ENCODE measurements at regions of chr14 and their contacts with region 1.

Region 1: DNA sequence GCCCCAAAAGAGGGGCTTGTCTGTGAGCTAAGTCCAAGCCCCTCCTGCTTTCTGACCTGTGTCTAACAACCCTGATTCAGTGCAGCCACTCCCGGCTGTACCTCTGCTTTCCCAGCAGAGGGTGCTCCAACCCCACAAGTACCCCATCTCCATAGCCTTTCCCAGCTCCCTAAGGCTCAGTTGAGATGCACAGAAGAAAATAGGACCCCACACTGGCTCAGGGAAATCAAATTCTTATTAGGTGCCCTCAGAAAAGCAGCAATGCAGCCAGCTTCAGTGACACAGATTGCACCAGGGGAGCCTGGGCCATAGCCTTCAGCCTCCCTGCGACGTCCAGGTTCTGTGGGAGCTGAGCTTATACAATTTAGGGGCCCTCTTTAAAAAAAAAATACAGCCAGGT is 49.9 kb downstream of the LRRC74A start:
- DNase-seq: peak; percentile 81
- ATAC-seq: peak; percentile 95
- H3K4me3 ChIP-seq: no peak overlapping the region
- H3K27ac ChIP-seq: no peak overlapping the region
- H3K4me1 ChIP-seq: peaks cover 0 to 9% of the 10 kb centered on the region in 2 experiments; a peak in 3 of 4 replicates
- H3K27me3 ChIP-seq: no peaks in the 10 kb centered on the region
- CTCF ChIP-seq: peak; percentile 96 to 98 (median 97)
- POLR2A ChIP-seq: no peak
- RAD21 ChIP-seq: peak; percentile 100

Region 2: DNA sequence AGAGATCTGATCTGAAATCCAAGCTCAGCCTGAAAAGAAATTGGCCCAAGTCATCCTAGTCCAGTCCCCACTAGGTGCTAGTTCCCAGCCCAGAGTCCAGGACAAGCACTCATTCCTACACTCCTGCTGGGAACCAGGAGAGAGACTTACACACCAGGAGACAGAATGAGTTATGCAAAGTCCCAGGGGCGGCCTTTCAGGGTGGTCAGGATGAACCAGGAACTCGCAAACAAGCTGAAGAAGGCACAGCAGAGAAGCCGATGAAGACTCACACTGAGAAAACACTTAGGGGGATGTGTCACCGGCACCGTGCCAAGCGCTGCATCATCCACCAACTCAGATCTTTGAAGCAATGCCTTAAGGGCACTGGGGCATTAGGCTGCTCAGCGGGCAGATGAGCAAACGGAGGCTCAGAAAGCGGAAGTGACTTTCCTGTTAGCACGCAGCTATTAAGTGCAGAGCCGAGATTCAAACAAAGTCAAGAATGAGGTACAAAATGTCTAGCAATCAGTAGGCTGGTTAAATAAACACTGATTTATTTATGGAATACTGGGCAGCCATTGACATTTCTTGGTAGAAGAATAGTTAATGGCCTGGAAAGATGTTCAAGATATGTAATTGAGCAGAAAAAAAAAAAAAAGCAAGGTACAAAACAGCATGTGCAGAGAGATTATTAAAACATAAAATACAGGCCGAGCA is 28.8 kb after region 1 on chr14:
- CTCF ChIA-PET with region 1: interaction called, 7 read pairs
- POLR2A ChIA-PET with region 1: interaction called, 7 read pairs
- RAD21 ChIA-PET with region 1: interaction called in 1 of 2 experiments, 10 read pairs
- intact Hi-C with region 1: no loop called
- DNase-seq: peak; percentile 87
- ATAC-seq: peak; percentile 85
- H3K4me3 ChIP-seq: peak overlapping the region; percentile 9 to 49; a peak in 2 of 4 replicates
- H3K27ac ChIP-seq: peak overlapping the region; percentile 81
- H3K4me1 ChIP-seq: peaks cover 45 to 55% of the 10 kb centered on the region in 2 experiments
- H3K27me3 ChIP-seq: no peaks in the 10 kb centered on the region
- CTCF ChIP-seq: no peak
- POLR2A ChIP-seq: no peak
- RAD21 ChIP-seq: peak; percentile 6; the same call in 1 of the 2 replicates

Region 3: DNA sequence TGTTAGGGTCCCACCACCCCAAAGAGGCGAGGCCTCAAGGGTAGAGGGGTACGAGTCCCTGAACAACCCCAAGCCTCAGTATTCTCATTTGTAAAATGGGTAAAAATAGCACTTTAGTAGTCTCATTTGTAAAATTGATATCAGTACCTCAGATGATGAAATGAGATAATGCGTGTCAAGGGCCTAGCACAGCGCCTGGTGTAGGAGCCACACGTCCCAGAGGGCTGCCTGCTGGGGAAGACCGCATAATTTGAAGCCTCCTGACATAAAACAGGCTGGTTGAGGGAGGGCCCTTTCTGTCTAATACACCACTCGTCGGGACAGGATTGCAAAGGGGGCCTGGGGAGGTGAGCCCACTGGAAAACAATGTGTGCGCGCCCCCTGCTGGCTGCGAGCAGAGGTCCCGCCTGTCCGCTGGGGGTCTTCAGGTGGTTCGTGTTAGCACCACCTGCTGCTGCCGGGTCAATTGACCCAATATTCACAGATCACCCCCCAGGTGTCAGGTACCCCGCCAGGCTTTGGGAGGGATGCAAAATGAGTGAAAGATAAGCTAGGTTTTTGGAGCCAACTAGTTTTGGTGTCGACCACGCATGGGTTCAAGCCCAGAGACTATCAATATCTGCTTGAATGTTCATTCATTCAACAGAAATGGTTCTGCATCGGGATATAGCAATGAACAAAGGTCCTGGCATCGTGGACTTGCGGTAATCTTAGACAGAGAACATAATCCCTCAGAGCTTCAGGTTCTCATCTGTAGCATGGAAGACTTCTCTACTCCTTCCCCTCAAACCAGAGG is 177.2 kb after region 1 on chr14:
- CTCF ChIA-PET with region 1: interaction called, 20 read pairs
- POLR2A ChIA-PET with region 1: no interaction called
- RAD21 ChIA-PET with region 1: interaction called, 3 to 7 read pairs
- intact Hi-C with region 1: no loop called
- DNase-seq: no peak
- ATAC-seq: peak; percentile 84
- H3K4me3 ChIP-seq: no peak overlapping the region
- H3K27ac ChIP-seq: peak overlapping the region; percentile 50; the same call in 1 of the 2 replicates
- H3K4me1 ChIP-seq: peaks cover 27 to 33% of the 10 kb centered on the region in 2 experiments
- H3K27me3 ChIP-seq: no peaks in the 10 kb centered on the region
- CTCF ChIP-seq: peak in 2 of 3 experiments; percentile 90 to 99; a peak in 4 of 6 replicates
- POLR2A ChIP-seq: no peak
- RAD21 ChIP-seq: no peak

Region 4: GRCh38 chr14:77076113-77076631 is 200.1 kb after region 1 on chr14:
- CTCF ChIA-PET with region 1: interaction called, 272 read pairs
- POLR2A ChIA-PET with region 1: interaction called, 27 read pairs
- RAD21 ChIA-PET with region 1: interaction called, 40 to 54 read pairs
- intact Hi-C with region 1: no loop called
- DNase-seq: no peak
- ATAC-seq: no peak
- H3K4me3 ChIP-seq: no peak overlapping the region
- H3K27ac ChIP-seq: no peak overlapping the region
- H3K4me1 ChIP-seq: peaks cover 19 to 31% of the 10 kb centered on the region in 2 experiments
- H3K27me3 ChIP-seq: no peaks in the 10 kb centered on the region
- CTCF ChIP-seq: no peak
- POLR2A ChIP-seq: no peak
- RAD21 ChIP-seq: no peak

Region 5: GRCh38 chr14:77097700-77098528 is 221.8 kb after region 1 on chr14 and contains the start of gene CIPC:
- CTCF ChIA-PET with region 1: interaction called, 131 read pairs
- POLR2A ChIA-PET with region 1: interaction called, 8 read pairs
- RAD21 ChIA-PET with region 1: interaction called, 7 to 13 read pairs
- intact Hi-C with region 1: loop called (anchors 1 kb)
- DNase-seq: peak; percentile 98
- ATAC-seq: peak; percentile 89
- H3K4me3 ChIP-seq: peak within 1 kb of the TSS; percentile 85 to 97
- H3K27ac ChIP-seq: peak within 1 kb of the TSS; percentile 91
- H3K4me1 ChIP-seq: peaks cover 24 to 28% of the 10 kb centered on the region in 2 experiments
- H3K27me3 ChIP-seq: no peaks in the 10 kb centered on the region
- CTCF ChIP-seq: no peak
- POLR2A ChIP-seq: peak; percentile 38
- RAD21 ChIP-seq: no peak
- total RNA-seq, gene CIPC: 20.6 TPM

Region 6: GRCh38 chr14:77306851-77307765 is 431.0 kb after region 1 on chr14:
- CTCF ChIA-PET with region 1: interaction called, 9 read pairs
- POLR2A ChIA-PET with region 1: no interaction called
- RAD21 ChIA-PET with region 1: no interaction called
- intact Hi-C with region 1: loop called (anchors 5 kb)
- DNase-seq: no peak
- ATAC-seq: no peak
- H3K4me3 ChIP-seq: no peak overlapping the region
- H3K27ac ChIP-seq: no peak overlapping the region
- H3K4me1 ChIP-seq: peaks cover 19 to 22% of the 10 kb centered on the region in 2 experiments
- H3K27me3 ChIP-seq: no peaks in the 10 kb centered on the region
- CTCF ChIP-seq: no peak
- POLR2A ChIP-seq: no peak
- RAD21 ChIP-seq: no peak

Measured in HCT116 (cell line).